Astrocyte of the cerebellum (primary cell): ENCODE measurements at regions of chr10 and their contacts with region 1.

Region 1: GRCh38 chr10:17795813-17796594 is 13.1 kb upstream of the MRC1 start:
- DNase-seq: no peak
- H3K4me3 ChIP-seq: no peak overlapping the region
- CTCF ChIP-seq: no peak

Region 2: DNA sequence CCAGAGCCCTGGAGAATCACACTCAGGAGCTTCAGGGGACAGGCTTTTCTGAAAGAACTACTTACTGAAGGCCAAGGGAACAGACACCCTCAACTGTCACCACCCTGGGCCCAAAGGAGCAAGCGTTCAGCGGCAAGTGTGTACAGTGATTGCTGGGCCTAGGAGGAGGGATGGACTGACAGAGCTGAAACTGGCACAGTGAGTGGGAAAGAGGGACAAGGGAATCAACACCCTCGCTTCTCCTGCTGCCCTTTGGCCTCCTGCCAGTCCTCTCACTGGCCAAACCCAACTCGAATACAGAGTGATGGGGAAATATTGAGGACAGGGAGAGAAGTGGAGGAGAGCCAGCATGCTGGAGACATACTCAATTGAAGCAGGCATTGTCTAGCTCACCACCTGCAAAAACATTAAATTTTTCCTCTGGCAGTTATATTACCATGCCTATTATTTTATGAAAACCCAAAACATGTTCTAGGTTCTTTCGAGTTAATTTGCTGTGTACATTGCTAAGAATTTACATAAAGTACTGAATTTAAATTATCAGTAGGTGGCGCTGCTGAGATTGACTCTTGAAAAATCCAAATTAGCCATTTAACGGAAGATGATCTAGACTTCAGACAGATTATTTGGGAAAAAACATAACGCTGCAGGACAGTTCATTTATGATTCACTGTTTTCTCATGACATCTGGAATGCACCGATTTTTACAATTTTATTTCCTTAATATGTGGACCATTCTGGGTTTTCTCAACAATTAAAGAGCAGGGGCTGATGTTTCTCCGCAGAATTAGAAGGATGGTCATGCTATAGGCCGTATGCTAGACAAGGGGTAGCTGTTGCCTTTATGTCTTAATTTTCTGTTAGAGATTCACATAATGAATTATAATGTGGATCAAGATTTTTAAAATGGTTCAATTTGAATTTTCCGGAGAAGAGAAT is 58.7 kb before region 1 on chr10:
- in situ Hi-C with region 1: loop called (anchors 5 kb)
- DNase-seq: peak; percentile 34
- H3K4me3 ChIP-seq: no peak overlapping the region
- CTCF ChIP-seq: peak; percentile 47